Activated B cell treated with CpG ODN at 0.5 μM for 24 hours (primary cell): ENCODE measurements at regions of chr10 and their contacts with region 1.

Region 1: DNA sequence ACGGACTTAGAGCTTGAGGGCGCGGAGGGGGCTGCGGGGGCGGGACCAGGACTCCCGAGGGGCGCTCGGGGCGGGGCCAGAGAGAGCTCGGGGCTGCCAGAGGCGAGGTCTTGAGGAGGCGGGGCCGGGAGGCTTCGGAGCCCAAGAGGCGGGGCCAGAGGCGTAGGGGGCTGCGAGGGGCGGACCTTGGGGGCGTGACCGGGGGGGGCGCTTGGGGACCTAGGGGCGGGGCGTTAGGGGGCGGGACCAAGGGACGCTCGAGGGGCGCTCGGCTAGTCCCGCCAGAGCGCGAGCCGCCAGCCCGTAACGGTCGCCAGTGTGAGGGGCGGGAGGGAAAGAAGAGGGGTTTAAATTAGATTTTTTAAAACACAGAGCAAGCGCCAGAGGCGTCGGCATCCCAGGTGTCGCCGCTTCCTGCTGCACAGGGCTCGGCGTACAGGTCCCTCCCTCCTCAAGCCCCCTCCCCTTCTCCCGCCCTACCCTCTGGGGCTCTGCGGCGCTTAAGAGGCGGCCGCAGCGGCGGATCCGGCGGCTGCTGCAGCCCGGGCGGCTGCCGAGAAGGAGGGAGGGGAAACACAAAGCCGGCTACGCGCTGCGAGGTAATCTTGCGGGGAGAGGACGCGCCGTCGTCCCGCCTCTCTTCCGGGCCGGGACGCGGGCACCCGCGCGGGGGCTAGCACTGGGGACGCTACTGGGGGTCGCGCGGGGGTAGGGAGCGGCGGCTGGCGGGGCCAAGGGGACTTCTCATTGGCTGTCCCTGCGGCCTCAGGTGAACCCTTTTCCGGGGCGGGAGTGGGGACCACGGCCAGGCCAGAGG is at the start of gene ADD3:
- DNase-seq: peak; percentile 94
- ATAC-seq: peak; percentile 85
- H3K4me3 Mint-ChIP-seq: no peak within 1 kb of the TSS
- H3K27ac Mint-ChIP-seq: no peak within 1 kb of the TSS
- H3K4me1 Mint-ChIP-seq: peaks cover 54% of the 10 kb centered on the region
- H3K27me3 Mint-ChIP-seq: no peaks in the 10 kb centered on the region
- CTCF ChIP-seq: no peak
- total RNA-seq, gene ADD3: 85.8 and 95.3 TPM in 2 replicates

Region 2: GRCh38 chr10:109883859-109884771 is 123.8 kb before region 1 on chr10:
- CTCF ChIA-PET with region 1: interaction called, 11 read pairs
- POLR2A ChIA-PET with region 1: interaction called, 4 read pairs
- intact Hi-C with region 1: loop called (anchors 1 kb)
- DNase-seq: peak; percentile 40
- ATAC-seq: peak; percentile 88
- H3K4me3 Mint-ChIP-seq: no peak overlapping the region
- H3K27ac Mint-ChIP-seq: no peak overlapping the region
- H3K4me1 Mint-ChIP-seq: peaks cover 12% of the 10 kb centered on the region
- H3K27me3 Mint-ChIP-seq: no peaks in the 10 kb centered on the region
- CTCF ChIP-seq: peak; percentile 95

Region 3: DNA sequence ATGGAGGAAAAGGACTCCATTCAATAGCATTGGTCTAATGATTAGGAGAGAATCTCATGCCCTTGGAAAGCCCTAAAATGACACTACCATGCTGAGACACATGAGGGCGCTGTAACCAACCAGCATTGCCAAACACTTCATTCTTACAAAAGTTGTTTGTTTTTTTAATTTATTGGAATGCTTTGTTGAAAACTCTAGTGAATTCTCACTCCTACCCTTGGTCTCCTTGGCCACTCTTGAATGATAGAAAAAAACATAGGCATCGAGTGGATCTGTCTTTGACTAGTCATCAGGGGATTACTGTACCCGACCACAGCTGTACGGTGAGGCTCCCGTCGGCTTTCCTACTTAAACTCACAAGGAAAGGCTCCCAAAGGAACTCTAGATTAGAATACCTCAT is 29.4 kb before region 1 on chr10:
- CTCF ChIA-PET with region 1: interaction called, 4 read pairs
- POLR2A ChIA-PET with region 1: interaction called, 5 read pairs
- intact Hi-C with region 1: loop called (anchors 1 kb)
- DNase-seq: no peak
- ATAC-seq: peak; percentile 42
- H3K4me3 Mint-ChIP-seq: no peak overlapping the region
- H3K27ac Mint-ChIP-seq: no peak overlapping the region
- H3K4me1 Mint-ChIP-seq: no peaks in the 10 kb centered on the region
- H3K27me3 Mint-ChIP-seq: no peaks in the 10 kb centered on the region
- CTCF ChIP-seq: peak; percentile 19

Region 4: GRCh38 chr10:110067960-110068770 is 60.3 kb after region 1 on chr10:
- CTCF ChIA-PET with region 1: interaction called, 3 read pairs
- POLR2A ChIA-PET with region 1: interaction called, 51 read pairs
- intact Hi-C with region 1: loop called (anchors 1 kb)
- DNase-seq: no peak
- ATAC-seq: peak; percentile 62
- H3K4me3 Mint-ChIP-seq: peak overlapping the region; percentile 76
- H3K27ac Mint-ChIP-seq: peak overlapping the region; percentile 97
- H3K4me1 Mint-ChIP-seq: peaks cover 81% of the 10 kb centered on the region
- H3K27me3 Mint-ChIP-seq: no peaks in the 10 kb centered on the region
- CTCF ChIP-seq: no peak

Region 5: GRCh38 chr10:110210674-110211464 is 203.0 kb after region 1 on chr10:
- CTCF ChIA-PET with region 1: no interaction called
- POLR2A ChIA-PET with region 1: interaction called, 6 read pairs
- intact Hi-C with region 1: loop called (anchors 2 kb)
- DNase-seq: peak; percentile 84
- ATAC-seq: peak; percentile 73
- H3K4me3 Mint-ChIP-seq: peak overlapping the region; percentile 87
- H3K27ac Mint-ChIP-seq: peak overlapping the region; percentile 79
- H3K4me1 Mint-ChIP-seq: peaks cover 55% of the 10 kb centered on the region
- H3K27me3 Mint-ChIP-seq: peaks cover 2% of the 10 kb centered on the region
- CTCF ChIP-seq: no peak

Region 6: GRCh38 chr10:110567201-110568054 is 559.5 kb after region 1 on chr10 and contains the start of gene SMC3:
- CTCF ChIA-PET with region 1: no interaction called
- POLR2A ChIA-PET with region 1: no interaction called
- intact Hi-C with region 1: loop called (anchors 2 kb)
- DNase-seq: peak; percentile 89
- ATAC-seq: peak; percentile 88
- H3K4me3 Mint-ChIP-seq: peak within 1 kb of the TSS; percentile 91
- H3K27ac Mint-ChIP-seq: peak within 1 kb of the TSS; percentile 98
- H3K4me1 Mint-ChIP-seq: peaks cover 41% of the 10 kb centered on the region
- H3K27me3 Mint-ChIP-seq: no peaks in the 10 kb centered on the region
- CTCF ChIP-seq: no peak
- total RNA-seq, gene SMC3: 41.1 and 43.3 TPM in 2 replicates